ENCODE measurements at regions of chr19 and their contacts with region 1.

Region 1: GRCh38 chr19:3479177-3479833 is 1.0 kb downstream of the SMIM24 start:
- DNase-seq: no peak
- H3K4me3 ChIP-seq: no peak overlapping the region
- H3K27me3 ChIP-seq: peaks cover 14% of the 10 kb centered on the region
- CTCF ChIP-seq: no peak

Region 2: GRCh38 chr19:3304871-3305423 is 174.4 kb before region 1 on chr19:
- CTCF ChIA-PET with region 1: interaction called, 68 read pairs
- POLR2A ChIA-PET with region 1: no interaction called
- DNase-seq: no peak
- H3K4me3 ChIP-seq: no peak overlapping the region
- H3K27me3 ChIP-seq: peaks cover 6% of the 10 kb centered on the region
- CTCF ChIP-seq: peak; percentile 87

Region 3: DNA sequence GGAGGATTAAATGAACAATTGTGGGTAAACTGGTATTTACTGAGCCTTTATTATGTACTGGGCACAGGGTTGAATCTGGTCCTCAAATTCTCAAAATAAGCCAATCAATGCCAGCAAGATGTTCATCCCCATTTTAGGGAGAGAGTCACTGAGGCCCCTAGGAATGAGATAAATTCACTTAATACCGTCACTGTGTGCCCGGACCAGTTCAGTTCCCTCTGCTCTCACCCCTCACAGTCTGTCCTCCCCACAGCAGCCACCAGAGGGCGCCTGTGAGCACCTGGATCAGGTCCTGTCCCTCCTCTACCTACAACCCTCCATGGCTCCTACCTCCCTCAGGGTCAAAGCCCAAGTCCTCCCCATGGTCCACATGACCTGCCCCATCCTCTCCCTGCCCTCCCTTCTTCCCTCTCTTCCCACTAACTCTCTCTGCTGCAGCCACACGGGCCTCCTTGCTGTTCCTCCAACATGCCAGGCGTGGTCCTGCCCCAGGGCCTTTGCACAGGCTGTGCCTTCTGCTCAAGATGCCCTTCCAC is 154.9 kb before region 1 on chr19:
- CTCF ChIA-PET with region 1: interaction called, 62 read pairs
- POLR2A ChIA-PET with region 1: no interaction called
- DNase-seq: no peak
- H3K4me3 ChIP-seq: no peak overlapping the region
- H3K27me3 ChIP-seq: peaks cover 6% of the 10 kb centered on the region; the same call in 1 of the 2 replicates
- CTCF ChIP-seq: peak; percentile 83

Region 4: DNA sequence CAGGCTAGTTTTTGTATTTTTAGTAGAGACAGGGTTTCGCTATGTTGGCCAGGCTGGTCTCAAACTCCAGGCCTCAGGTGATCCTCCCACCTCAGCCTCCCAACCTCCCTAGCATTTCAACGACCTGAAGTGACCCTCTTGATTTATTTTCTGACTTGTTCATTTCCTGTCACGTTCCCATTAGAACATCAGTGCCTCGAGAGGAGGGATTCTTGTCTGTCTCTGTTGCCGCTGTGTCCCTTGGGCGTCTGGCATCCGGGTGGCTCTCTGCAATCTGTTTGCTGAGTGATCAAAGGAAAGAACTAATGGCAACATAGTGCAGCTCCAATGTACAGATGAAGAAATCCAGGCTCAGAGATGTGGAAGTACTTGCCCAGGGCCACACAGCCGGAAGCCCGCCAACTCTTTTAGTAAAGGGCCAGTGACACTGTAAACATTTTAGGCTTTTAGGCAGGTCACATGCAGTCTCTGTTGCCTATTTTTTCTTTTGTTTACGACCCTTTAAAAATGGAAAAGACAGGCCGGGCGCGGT is 65.4 kb before region 1 on chr19:
- CTCF ChIA-PET with region 1: no interaction called
- POLR2A ChIA-PET with region 1: no interaction called
- DNase-seq: no peak
- H3K4me3 ChIP-seq: no peak overlapping the region
- H3K27me3 ChIP-seq: no peaks in the 10 kb centered on the region
- CTCF ChIP-seq: no peak

Measured in BJ (cell line).